MCF 10A (cell line): ENCODE measurements at regions of chr1 and their contacts with region 1.

Region 1: DNA sequence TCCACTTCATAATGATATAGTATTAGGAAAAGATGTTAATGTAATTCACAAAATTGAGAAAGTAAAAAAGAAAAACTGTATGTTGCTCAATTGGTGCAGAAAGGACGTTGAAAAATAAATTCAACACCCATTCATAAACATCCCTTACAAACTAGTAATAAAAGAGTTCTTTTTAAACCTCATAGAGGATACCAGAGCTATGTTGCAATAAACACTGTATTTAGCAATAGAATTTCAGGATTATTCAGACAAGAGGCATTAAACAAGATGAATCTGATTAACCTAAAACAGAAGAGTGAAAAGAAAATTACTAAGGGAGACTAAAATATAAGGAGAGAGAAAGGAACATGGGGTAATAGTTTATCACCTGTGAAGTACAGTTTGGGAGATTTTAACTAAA is 154.8 kb downstream of the NTPCR start:
- DNase-seq: peak; percentile 74
- H3K4me3 Mint-ChIP-seq: no peak overlapping the region
- H3K27ac Mint-ChIP-seq: peak overlapping the region; percentile 17
- H3K4me1 Mint-ChIP-seq: peaks cover 42% of the 10 kb centered on the region
- H3K27me3 Mint-ChIP-seq: no peaks in the 10 kb centered on the region
- CTCF ChIP-seq: no peak

Region 2: DNA sequence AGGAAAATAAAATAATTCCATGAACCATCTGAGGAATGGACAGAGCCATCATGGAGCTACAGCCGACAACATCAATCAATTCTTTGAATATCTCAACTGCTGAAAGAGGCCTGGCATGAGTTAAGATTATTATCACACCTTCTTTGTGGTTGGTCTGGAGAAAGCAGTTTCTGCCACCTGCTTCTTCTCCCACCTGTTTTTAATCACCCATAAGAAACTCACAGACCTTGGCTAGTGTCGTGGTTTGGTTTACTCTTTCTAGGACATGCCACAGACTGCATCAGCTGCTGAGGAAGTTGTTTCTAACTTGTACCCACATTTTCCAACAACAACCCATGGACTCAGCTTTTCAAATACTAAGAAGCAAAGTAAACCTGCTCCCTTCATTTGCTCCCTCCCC is 89.3 kb before region 1 on chr1:
- CTCF ChIA-PET with region 1: no interaction called
- POLR2A ChIA-PET with region 1: no interaction called
- intact Hi-C with region 1: no loop called
- DNase-seq: no peak
- H3K4me3 Mint-ChIP-seq: no peak overlapping the region
- H3K27ac Mint-ChIP-seq: no peak overlapping the region
- H3K4me1 Mint-ChIP-seq: no peaks in the 10 kb centered on the region
- H3K27me3 Mint-ChIP-seq: no peaks in the 10 kb centered on the region
- CTCF ChIP-seq: no peak

Region 3: DNA sequence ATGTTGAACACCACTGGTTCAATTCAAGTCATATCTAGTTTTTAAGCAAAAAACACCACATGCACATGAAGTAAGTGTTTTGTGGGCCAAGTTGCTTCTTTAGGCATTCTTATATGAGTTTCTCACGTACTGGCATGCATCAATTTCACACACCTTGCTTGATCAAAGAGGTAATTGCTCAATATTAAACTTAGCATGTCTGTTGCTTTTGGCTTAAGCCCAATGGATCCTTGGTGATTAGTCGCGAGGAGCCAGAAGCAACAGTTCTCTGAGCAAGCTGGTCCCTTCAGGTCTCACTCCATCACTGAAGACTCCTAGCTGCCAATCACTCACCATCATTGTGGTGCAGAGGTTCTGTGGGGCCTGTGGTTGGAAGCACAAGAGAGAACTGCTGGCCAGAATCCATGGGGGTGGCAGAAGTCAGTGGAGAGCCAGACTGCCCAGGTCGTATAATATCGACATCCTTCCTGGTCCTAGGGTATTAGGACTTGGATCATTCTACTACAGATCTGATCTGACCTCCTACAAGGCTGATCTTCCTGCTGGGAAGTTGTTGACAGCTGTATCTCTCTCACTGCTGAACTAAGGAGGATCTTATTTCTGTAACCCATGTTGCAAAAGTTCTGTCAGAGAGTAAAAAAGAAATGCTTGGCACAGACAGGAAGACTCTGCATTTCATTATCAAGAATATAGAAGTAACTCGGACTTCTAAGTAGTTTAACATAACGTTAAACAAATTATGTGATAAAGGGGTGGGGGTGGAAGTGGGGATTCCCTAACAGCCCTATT is 14.3 kb before region 1 on chr1:
- CTCF ChIA-PET with region 1: interaction called, 3 read pairs
- POLR2A ChIA-PET with region 1: interaction called, 11 read pairs
- intact Hi-C with region 1: no loop called
- DNase-seq: peak; percentile 95
- H3K4me3 Mint-ChIP-seq: no peak overlapping the region
- H3K27ac Mint-ChIP-seq: peak overlapping the region; percentile 47
- H3K4me1 Mint-ChIP-seq: peaks cover 12% of the 10 kb centered on the region
- H3K27me3 Mint-ChIP-seq: no peaks in the 10 kb centered on the region
- CTCF ChIP-seq: no peak